Posterior vena cava (tissue), 2 donors: ENCODE measurements at regions of chr14 and their contacts with region 1.

Region 1: GRCh38 chr14:20697273-20698017 is 8.9 kb downstream of the ANG start:
- DNase-seq: peak; percentile 86

Region 2: GRCh38 chr14:20494935-20495766 is 202.3 kb before region 1 on chr14:
- intact Hi-C with region 1: no loop called
- DNase-seq: no peak

Region 3: DNA sequence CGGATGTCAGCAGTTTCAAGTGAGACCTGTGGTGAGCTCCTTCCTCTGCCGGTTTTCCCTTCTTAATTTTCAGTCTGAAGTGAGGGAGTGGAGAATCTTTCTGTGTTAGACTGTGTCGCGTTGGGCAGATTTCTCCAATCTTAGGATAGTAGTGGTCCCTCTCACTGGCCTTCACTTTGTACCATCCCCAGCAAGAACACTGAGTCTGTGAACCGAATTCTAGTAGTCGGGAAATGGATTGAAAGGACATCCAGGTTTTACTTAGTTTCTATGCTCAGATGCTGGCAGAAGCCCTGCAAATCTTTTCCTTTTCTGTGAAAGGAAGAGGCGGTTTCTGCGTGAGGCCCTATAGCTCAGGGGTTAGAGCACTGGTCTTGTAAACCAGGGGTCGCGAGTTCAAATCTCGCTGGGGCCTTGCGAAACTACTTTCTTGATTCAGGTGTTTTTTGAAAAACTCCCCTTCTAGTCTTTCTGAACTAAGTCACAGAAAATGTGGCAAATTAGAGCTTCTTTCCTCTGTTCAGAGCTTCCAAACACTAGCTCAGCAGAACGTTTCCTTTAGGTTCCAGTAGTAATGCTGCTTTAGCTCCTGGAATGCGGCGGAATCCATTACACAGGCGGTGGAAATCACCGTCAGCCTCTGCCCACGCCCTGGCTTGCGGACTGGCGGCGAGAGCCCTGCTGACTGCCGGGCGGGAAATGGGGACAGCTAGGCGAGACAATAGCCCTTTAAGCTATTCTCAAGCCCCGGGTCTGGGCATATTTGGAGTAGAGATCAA is 15.9 kb before region 1 on chr14:
- intact Hi-C with region 1: no loop called
- DNase-seq: peak; percentile 90

Region 4: DNA sequence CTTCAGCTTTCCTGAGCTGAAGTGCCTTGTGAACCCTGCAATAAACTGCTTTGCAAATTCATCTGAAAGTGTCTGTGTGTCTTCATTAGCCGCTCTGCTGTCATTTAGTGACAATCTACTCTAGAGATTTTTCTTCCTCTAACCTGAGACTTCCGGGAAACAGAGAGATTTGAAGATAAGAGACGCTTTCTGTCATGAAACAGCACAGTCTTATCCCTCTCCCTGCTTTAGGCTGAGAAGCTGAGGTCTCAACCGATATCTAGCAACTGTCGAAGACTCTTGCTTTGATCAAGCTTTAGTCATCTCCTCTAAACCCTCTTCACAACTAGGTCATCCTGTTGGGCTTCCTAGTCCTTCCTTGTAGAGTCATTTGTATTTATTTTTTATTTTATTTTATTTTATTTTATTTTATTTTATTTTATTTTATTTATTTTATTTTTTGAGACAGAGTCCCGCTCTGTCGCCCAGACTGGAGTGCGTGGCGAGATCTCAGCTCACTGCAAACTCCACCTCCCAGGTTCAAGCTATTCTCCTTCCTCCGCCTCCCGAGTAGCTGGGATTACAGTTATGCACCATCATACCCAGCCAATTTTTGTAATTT is 259.0 kb after region 1 on chr14:
- intact Hi-C with region 1: loop called in 1 of 2 experiments (anchors 5 kb)
- DNase-seq: no peak